Aorta (tissue), 5 donors: ENCODE measurements at regions of chr6 and their contacts with region 1.

Region 1: DNA sequence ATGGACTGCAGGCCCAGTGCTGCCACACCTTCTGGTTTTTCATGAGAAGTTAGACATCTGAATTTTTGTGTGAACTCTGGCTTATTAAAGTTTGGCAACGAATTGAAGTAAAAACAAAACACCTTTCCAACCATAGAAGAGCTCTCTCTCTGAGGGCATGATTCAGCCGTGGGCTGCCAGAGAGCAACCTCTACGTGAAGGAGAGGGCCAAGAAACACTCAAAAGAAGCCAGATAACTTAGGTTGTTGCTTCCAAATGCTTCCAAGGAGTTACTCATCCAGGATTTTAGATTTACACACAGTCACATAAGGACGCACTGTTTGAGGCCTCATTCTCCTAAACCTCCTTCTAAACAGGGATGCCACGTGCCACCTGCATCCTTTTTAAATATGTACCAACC is 65.5 kb downstream of the NRN1 start:
- DNase-seq: no peak
- ATAC-seq: peak; percentile 62
- H3K4me3 ChIP-seq: no peak overlapping the region
- H3K27ac ChIP-seq: peak overlapping the region in 1 of 2 donors; percentile 79
- H3K4me1 ChIP-seq: peaks cover 0 to 4% of the 10 kb centered on the region in 2 donors
- H3K27me3 ChIP-seq: no peaks in the 10 kb centered on the region

Region 2: DNA sequence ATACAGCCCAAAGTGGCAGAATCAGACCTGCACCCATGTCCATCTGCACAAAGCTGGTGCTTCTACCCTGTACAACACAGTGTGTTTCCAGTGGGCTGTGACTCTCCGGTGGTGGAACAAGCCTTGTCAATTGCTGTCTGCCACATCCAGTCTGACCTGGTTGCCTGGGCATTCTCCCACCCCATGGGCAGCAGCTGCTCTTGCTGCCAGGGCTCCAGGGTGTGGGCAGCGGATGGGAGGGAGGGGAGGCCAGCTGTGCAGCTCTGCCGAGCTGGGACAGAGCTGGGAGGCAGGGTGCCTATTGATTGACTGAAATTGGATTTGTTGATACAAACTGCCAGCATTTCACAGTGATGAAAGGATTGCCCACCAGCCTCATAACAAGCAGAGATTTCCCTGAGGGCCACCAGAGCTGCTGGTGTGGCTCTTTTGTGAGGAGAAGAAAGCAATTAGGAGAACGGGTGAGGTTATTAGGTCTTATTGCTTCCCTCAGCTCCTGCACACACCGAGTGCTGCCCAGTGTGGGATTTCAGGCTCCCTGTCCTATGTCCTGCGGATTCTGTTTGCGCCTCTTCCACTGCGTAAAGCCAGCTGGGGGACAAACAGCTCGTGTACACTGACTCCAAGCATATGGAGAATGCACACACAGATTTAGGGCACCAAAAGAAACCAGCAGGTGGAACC is 85.3 kb before region 1 on chr6:
- intact Hi-C with region 1: no loop called
- DNase-seq: no peak
- ATAC-seq: no peak
- H3K4me3 ChIP-seq: no peak overlapping the region
- H3K27ac ChIP-seq: no peak overlapping the region
- H3K4me1 ChIP-seq: no peaks in the 10 kb centered on the region
- H3K27me3 ChIP-seq: no peaks in the 10 kb centered on the region

Region 3: DNA sequence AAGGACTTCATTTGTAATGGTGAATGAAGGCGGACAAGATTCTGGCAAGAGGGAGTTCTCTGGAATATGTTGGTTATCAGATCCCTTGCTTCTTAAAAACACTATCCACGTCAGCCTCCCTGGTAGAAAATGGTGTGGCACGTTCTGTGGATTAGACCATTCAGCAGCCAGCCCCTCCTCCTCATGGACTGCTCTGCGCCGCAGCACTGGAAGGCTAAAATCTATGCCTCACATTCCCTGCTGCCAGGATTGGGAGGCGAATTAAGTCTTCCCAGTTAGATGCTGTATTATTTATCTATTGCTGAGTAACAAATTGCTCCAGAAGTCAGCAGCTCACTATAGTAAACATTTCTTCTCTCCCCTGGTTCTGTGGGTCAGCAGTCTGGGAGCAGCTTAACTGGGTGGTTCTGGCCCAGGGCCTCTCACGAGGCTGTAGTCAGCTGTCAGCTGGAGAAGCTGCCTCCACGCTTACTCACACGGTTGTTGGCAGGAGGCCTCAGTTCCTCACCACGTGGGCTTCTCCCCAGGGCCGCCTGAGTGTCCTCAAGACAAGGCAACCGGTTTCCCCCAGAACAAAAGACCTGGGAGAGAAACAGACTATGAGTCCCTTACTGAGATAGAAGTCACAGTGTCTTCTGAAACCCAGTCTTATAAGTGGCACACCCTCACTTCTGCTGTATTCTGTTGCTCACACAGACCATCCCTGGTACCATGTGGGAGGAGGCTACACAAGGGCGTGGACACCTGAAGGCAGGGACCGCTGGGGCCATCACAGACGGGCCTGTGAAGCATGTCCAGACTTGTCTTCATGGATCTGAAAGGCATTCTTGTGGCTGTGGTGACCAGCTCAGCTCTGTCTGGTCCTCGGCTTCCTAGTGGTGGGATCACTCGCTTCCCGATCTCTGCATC is 35.5 kb before region 1 on chr6:
- intact Hi-C with region 1: loop called in 1 of 2 experiments (anchors 5 kb)
- DNase-seq: peak; percentile 89 to 94
- ATAC-seq: peak; percentile 94
- H3K4me3 ChIP-seq: no peak overlapping the region
- H3K27ac ChIP-seq: peak overlapping the region in 1 of 2 donors; percentile 45
- H3K4me1 ChIP-seq: peaks cover 0 to 4% of the 10 kb centered on the region in 2 donors
- H3K27me3 ChIP-seq: no peaks in the 10 kb centered on the region

Region 4: GRCh38 chr6:5968817-5969734 is 27.9 kb after region 1 on chr6:
- intact Hi-C with region 1: loop called in 1 of 2 experiments (anchors 2 kb)
- DNase-seq: peak; percentile 87 to 93
- ATAC-seq: peak; percentile 67
- H3K4me3 ChIP-seq: no peak overlapping the region
- H3K27ac ChIP-seq: no peak overlapping the region
- H3K4me1 ChIP-seq: peaks cover 0 to 5% of the 10 kb centered on the region in 2 donors
- H3K27me3 ChIP-seq: no peaks in the 10 kb centered on the region

Region 5: DNA sequence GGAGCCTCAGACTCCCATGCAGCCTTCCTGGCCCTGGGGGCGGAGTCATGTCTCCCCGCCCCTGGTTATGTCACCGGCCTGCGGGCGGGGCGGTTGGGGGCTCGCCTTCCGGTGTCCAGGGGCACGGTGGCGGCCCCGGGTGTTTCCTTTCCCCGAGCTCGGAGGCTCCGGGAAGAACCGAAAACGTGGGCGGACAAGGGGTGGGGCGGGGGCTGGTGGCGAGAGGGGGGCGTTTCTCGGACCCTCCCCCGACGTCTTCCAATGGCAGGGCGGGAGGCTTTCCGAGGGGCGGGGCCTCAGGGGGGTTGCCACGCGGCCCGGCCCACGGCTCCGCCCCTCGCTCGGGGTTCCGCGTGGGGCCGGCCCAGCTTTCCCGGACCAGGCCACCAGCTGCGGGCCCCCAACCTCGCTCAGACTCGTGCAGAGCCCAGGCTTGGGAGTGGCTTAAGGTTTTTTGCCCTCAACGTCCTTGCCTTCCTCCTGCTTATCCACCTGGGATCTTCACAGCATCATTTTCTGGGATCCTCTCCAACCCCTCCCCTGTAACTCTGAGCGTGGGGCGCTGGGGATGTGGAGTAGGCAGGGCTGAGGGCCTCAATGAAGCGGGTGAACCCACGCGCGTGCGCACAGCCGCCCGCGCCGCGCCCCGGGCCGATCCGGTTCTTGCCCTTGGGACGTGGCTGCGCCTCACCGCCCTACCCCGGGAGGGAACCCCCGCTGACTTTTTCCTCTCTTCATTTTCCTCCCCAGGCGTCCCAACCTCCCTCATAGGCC is 67.6 kb after region 1 on chr6:
- intact Hi-C with region 1: loop called (anchors 2 to 10 kb)
- DNase-seq: peak; percentile 74 to 93
- ATAC-seq: peak; percentile 92
- H3K4me3 ChIP-seq: peak overlapping the region; percentile 24 to 30
- H3K27ac ChIP-seq: no peak overlapping the region
- H3K4me1 ChIP-seq: no peaks in the 10 kb centered on the region
- H3K27me3 ChIP-seq: no peaks in the 10 kb centered on the region